Naive thymus-derived CD8-positive, alpha-beta T cell (primary cell): ENCODE measurements at regions of chr20 and their contacts with region 1.

Region 1: GRCh38 chr20:34010405-34010931 is 16.8 kb downstream of the RALY start:
- DNase-seq: no peak
- ATAC-seq: no peak
- H3K4me3 Mint-ChIP-seq: peak overlapping the region in 8 of 10 donors; percentile 11 to 66 (median 53)
- H3K27ac Mint-ChIP-seq: peak overlapping the region in 6 of 10 donors; percentile 30 to 72 (median 42)
- H3K4me1 Mint-ChIP-seq: peaks cover 60 to 94% (median 91%) of the 10 kb centered on the region in 4 donors
- H3K27me3 Mint-ChIP-seq: no peaks in the 10 kb centered on the region

Region 2: GRCh38 chr20:33744773-33745385 is 265.6 kb before region 1 on chr20:
- POLR2A ChIA-PET with region 1: interaction called, 10 read pairs
- DNase-seq: no peak
- ATAC-seq: no peak
- H3K4me3 Mint-ChIP-seq: no peak overlapping the region
- H3K27ac Mint-ChIP-seq: peak overlapping the region in 1 of 10 donors; percentile 25
- H3K4me1 Mint-ChIP-seq: peaks cover 0 to 4% (median 2%) of the 10 kb centered on the region in 4 donors
- H3K27me3 Mint-ChIP-seq: no peaks in the 10 kb centered on the region

Region 3: DNA sequence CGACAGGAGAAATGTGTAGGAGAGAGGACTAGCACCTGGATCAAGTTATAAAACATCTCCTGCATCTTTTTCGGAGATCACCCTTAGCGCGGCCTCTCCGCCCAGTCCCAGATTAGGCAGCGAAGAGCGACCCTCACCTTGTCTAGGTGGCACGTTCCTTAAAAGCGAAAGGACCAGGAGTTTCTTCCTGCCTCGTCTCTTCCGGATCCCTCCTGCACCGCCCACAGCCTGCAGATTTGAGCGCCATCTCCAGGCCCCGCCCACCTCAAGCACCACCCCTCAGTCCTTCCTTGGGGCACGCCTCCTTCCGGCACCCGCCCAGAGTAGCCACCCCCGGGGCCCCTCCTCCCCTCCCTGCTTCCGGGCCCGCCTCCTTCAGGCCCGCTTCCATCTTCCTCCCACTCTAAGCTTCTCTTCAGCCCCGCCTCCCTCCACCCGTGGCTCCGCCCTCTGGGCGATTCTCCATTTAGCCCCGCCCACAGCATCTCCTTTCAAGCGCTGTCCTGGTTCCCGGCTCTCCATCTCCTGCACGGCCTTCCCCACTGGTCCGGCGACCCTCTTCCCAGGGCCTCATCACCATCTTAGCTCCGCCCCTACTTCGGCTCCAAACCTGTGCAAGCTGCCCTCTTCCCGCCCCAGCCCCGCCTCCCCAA is 17.4 kb before region 1 on chr20:
- POLR2A ChIA-PET with region 1: interaction called, 13 read pairs
- DNase-seq: peak; percentile 98 to 100 (median 99)
- ATAC-seq: peak; percentile 77 to 80
- H3K4me3 Mint-ChIP-seq: peak overlapping the region; percentile 96 to 100 (median 98)
- H3K27ac Mint-ChIP-seq: peak overlapping the region; percentile 95 to 99 (median 99)
- H3K4me1 Mint-ChIP-seq: peaks cover 25 to 68% (median 64%) of the 10 kb centered on the region in 4 donors
- H3K27me3 Mint-ChIP-seq: no peaks in the 10 kb centered on the region

Region 4: DNA sequence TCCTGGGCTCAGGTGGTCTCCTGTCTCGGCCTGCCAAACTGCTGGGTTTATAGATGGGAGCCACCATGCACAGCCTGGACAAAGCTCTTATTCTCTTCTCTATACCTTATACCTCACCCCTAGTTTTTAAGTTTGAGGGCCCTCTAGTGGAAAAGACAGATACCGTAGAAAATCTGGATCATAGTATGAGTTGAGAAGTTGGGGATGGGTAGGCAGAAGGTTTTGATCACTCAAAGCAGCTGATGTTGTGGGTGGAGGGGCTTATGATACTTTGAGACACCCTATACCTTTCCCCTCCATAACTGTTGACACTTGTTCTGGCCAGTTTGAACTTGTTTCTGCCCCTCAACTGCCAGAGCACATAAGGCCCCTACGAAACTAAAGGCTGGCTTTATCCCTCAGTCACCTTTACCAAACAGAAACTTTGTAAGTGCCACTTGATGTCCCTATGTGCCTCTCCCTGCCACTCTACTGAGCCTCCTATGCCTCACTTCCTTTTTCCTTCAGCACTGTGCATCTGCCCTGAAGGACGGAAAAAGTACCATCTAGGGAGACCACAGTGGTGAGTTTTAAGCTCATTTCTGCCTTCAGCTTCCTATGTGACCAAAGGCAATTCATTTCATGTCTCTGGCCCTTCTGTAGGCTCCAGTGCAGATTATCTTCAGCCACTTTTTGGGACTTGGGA is 11.8 kb after region 1 on chr20:
- POLR2A ChIA-PET with region 1: no interaction called
- DNase-seq: peak in 3 of 10 donors; percentile 22 to 31 (median 29)
- ATAC-seq: peak; percentile 56 to 66
- H3K4me3 Mint-ChIP-seq: peak overlapping the region in 3 of 10 donors; percentile 42 to 54 (median 49)
- H3K27ac Mint-ChIP-seq: peak overlapping the region; percentile 12 to 78 (median 59)
- H3K4me1 Mint-ChIP-seq: peaks cover 44 to 93% (median 86%) of the 10 kb centered on the region in 4 donors
- H3K27me3 Mint-ChIP-seq: no peaks in the 10 kb centered on the region